Panc1 (cell line): ENCODE measurements at regions of chr4 and their contacts with region 1.

Region 1: DNA sequence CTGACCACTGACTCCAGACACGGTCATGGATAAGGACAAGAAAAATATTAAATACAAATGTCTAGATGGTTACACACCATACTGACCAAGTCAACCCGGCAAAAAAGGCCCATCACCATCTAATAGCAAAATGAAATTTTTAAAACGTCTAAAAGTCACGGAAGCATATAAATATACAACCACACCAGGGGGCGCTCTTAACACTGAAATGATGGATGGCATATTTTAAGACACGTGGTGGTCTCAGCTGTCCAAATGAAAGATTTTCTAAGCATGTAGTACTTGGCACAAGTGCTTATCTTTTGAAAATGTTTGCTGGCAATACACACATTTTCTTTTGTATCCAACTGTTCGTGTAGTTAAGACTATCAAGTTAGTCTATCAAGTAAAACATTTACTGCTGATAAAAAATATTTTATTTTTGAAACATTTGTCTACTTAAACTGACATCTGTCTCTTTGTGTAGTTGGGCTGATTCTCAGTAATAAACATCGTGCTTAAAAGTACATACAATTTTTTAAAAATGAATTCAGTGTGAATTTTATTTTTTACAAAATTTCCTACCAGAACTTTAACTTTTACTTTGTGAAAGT is 64.6 kb downstream of the COX7B2 start:
- DNase-seq: peak; percentile 43
- ATAC-seq: no peak
- H3K4me3 ChIP-seq: no peak overlapping the region
- H3K27ac ChIP-seq: no peak overlapping the region
- H3K4me1 ChIP-seq: no peaks in the 10 kb centered on the region
- H3K27me3 ChIP-seq: no peaks in the 10 kb centered on the region
- CTCF ChIP-seq: peak; percentile 63; the same call in 1 of the 2 replicates

Region 2: DNA sequence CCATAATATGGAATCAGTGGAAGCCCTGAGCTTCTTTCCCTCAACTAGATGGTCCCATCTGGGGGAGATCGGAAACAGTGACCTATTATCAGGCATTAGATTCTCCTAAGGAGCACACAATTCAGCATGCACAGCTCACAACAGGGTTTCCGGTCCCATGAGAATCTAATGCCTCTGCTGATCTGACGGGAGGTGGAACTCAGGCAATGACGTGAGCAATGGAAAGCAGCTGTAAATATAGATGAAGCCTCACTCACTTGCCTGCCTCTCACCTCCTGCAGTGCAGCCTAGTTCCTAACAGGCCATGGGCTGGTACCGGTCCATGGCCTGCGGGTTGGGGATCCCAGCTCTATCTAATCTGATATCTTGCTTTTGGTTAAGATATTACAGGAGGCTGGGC is 24.3 kb before region 1 on chr4:
- CTCF ChIA-PET with region 1: no interaction called
- POLR2A ChIA-PET with region 1: no interaction called
- in situ Hi-C with region 1: no loop called
- intact Hi-C with region 1: no loop called
- DNase-seq: no peak
- ATAC-seq: no peak
- H3K4me3 ChIP-seq: no peak overlapping the region
- H3K27ac ChIP-seq: no peak overlapping the region
- H3K4me1 ChIP-seq: no peaks in the 10 kb centered on the region
- H3K27me3 ChIP-seq: no peaks in the 10 kb centered on the region
- CTCF ChIP-seq: no peak

Region 3: DNA sequence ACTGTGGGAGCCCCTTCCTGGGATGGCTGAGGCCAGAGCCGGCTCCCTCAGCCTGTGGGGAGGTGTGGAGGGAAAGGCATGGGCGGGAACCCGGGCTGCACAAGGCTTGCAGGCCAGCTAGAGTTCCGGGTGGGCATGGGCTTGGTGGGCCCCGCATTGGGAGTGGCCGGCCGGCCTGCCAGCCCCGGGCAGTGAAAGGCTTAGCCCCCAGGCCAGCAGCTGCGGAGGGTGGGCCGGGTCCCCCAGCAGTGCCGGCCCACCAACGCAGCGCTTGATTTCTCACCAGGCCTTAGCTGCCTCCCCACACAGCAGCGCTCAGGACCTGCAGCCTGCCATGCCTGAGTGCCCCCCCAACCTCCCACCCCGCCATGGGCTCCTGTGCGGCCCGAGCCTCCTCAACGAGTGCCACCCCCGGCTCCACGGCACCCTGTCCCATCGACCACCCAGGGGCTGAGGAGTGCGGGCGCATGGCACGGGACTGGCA is 13.4 kb before region 1 on chr4:
- CTCF ChIA-PET with region 1: interaction called, 17 read pairs
- POLR2A ChIA-PET with region 1: no interaction called
- in situ Hi-C with region 1: no loop called
- intact Hi-C with region 1: no loop called
- DNase-seq: no peak
- ATAC-seq: no peak
- H3K4me3 ChIP-seq: no peak overlapping the region
- H3K27ac ChIP-seq: no peak overlapping the region
- H3K4me1 ChIP-seq: no peaks in the 10 kb centered on the region
- H3K27me3 ChIP-seq: no peaks in the 10 kb centered on the region
- CTCF ChIP-seq: no peak

Region 4: DNA sequence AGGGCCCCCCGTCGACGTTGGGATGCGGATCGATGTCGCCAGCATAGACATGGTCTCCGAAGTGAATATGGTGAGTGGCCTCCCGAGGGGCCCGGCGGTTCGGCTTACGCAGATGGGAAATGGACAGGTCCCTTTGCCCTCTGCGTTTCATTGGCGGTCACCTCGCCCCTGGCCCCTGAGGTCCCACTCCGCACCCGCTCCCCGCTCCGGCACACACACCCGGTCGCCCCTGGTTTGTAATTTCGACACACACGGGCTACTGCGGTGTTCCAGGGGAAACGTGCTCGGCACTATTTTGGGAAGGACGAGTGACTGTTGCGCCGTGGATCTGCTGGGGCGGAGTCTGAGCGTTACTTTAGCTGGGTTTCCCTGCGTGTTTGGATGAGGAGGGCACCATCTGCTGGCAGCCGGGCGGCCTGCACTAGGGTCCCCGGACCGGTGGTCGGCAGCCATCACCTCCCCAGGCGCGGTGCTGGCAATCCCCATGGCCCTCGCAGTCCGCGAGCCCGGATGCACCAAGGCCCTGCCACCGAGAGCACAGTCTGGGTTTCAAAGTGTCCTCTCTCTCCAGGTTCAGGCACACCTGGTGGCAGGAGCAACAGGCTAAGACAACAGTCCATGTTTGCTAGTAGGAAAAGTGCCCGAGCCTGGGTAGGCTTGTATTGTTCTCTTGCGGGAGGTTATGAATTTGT is 188.1 kb after region 1 on chr4:
- CTCF ChIA-PET with region 1: no interaction called
- POLR2A ChIA-PET with region 1: no interaction called
- in situ Hi-C with region 1: no loop called
- intact Hi-C with region 1: loop called (anchors 5 kb)
- DNase-seq: peak; percentile 55
- ATAC-seq: peak; percentile 94
- H3K4me3 ChIP-seq: peak overlapping the region; percentile 37 to 60
- H3K27ac ChIP-seq: no peak overlapping the region
- H3K4me1 ChIP-seq: peaks cover 4% of the 10 kb centered on the region; the same call in 1 of the 2 replicates
- H3K27me3 ChIP-seq: 0 out of 2 replicates have a peak, but pooled peaks cover 5% of the 10 kb centered on the region
- CTCF ChIP-seq: peak; percentile 79

Region 5: GRCh38 chr4:47122592-47123291 is 278.3 kb after region 1 on chr4:
- CTCF ChIA-PET with region 1: no interaction called
- POLR2A ChIA-PET with region 1: no interaction called
- in situ Hi-C with region 1: no loop called
- intact Hi-C with region 1: loop called (anchors 5 kb)
- DNase-seq: peak; percentile 76
- ATAC-seq: peak; percentile 80
- H3K4me3 ChIP-seq: no peak overlapping the region
- H3K27ac ChIP-seq: no peak overlapping the region
- H3K4me1 ChIP-seq: no peaks in the 10 kb centered on the region
- H3K27me3 ChIP-seq: no peaks in the 10 kb centered on the region
- CTCF ChIP-seq: peak; percentile 80

Region 6: DNA sequence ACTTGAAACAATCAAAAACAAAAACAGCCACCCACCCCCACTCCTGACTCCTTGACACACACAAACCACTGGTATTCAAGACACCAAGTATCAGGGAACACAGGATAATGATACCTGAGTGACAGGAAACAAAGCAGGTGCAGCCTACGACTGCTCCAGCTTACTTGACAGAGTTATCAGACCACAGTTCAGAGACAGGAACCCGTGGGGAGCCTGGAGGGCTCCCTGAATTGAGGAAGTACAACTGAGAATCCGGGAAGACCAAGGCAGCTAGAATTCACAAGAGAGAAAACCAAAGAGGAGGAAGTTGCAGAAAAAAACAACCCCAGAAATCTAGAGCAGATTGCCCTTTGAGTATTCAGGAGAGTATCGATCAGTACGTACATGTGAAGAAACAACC is 598.6 kb after region 1 on chr4:
- CTCF ChIA-PET with region 1: no interaction called
- POLR2A ChIA-PET with region 1: no interaction called
- in situ Hi-C with region 1: no loop called
- intact Hi-C with region 1: no loop called
- DNase-seq: no peak
- ATAC-seq: no peak
- H3K4me3 ChIP-seq: no peak overlapping the region
- H3K27ac ChIP-seq: no peak overlapping the region
- H3K4me1 ChIP-seq: no peaks in the 10 kb centered on the region
- H3K27me3 ChIP-seq: no peaks in the 10 kb centered on the region
- CTCF ChIP-seq: no peak